ENCODE measurements at regions of chr19 and their contacts with region 1.

Region 1: DNA sequence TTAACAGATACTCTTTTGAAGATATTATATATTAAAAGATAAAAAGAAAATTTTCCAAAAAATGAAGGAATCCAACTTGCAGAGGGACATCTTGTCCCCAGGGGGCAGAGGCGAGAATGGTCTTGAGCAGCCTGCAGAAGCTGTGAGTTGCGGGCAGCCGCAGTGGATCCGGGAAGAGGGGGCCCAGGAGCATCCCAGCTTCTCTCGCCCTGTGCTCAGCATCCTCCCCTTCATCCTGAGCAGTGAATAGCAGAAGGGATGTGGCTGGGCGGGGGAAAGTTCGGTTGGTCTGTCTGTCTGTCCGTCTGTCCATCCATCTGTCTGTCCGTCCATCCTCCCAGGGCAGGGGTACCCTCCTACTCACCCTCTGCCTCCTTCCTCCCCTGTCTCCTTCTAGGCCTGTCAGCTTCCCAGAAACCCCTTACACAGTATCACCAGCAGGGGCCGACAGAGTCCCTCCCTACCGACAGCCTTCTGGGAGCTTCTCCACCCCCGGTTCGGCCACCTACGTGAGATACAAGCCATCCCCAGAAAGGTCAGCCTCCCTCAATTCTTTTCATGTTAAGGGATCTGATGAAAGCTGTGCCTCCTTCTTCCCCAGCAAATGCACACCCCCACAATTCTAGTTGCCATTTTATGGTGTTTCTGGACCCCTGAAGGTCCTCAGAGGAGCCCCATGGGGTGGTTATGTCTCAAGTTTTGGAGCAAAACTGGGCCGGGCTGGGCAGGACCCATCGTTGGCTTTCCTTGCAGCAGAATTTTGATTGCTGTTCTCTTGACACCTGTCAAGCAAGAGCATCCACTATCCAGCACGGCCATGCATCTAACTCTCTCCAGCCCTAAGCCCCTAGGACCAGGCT is 81.6 kb downstream of the DPF1 start:
- H3K4me3 ChIP-seq: no peak overlapping the region
- H3K27ac ChIP-seq: no peak overlapping the region
- H3K4me1 ChIP-seq: peaks cover 2% of the 10 kb centered on the region; the same call in 1 of the 2 replicates
- CTCF ChIP-seq: peak; percentile 90

Region 2: GRCh38 chr19:38122402-38123093 is 19.9 kb before region 1 on chr19:
- CTCF ChIA-PET with region 1: interaction called, 13 read pairs
- POLR2A ChIA-PET with region 1: no interaction called
- H3K4me3 ChIP-seq: no peak overlapping the region
- H3K27ac ChIP-seq: no peak overlapping the region
- H3K4me1 ChIP-seq: no peaks in the 10 kb centered on the region
- CTCF ChIP-seq: no peak

Region 3: DNA sequence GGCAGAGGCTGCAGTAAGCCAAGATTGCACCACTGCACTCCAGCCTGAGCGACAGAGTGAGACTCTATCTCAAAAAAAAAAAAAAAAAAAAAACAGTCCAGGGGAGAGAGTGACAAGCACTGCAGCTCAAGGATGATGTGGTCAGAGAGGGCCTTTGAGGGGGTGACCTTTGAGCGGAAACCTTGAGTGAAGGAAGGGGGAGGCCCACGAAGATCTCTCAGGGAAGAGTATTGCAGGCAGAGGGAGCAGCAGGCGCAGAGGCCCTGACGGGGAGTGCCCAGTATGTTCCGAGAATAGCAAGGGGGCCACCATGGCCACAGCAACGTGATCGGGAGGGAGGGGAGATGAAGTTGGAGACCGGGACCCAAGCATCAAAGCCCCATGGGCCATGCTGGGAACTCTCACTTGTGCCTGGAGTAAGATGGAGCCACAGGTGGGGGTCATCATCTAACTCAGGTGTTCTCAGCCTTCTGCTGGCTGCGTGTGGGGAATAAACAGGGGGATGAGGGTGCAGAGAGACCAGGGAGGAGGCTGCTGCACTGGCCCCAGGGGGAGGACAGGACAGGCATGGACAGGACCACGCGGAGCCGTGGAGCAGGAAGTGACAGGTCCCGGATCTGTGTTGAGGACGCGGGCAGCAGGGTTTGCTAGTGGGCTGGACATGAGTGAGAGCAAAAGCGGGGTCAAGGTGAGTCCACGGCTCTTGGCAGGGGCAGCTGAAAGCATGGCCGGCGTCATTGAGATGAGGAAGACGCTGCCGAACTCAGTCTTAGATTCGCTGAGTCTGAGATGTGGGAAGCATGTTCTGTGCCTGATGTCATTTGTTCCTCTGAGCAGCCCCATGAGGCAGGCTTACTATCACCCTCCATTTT is 21.2 kb after region 1 on chr19:
- CTCF ChIA-PET with region 1: interaction called, 15 read pairs
- POLR2A ChIA-PET with region 1: no interaction called
- H3K4me3 ChIP-seq: no peak overlapping the region
- H3K27ac ChIP-seq: no peak overlapping the region
- H3K4me1 ChIP-seq: no peaks in the 10 kb centered on the region
- CTCF ChIP-seq: no peak

Region 4: GRCh38 chr19:38209671-38210457 is 67.5 kb after region 1 on chr19:
- CTCF ChIA-PET with region 1: no interaction called
- POLR2A ChIA-PET with region 1: no interaction called
- H3K4me3 ChIP-seq: no peak overlapping the region
- H3K27ac ChIP-seq: 0 out of 2 replicates have a peak overlapping the region, but pooled peaks have one; percentile 31
- H3K4me1 ChIP-seq: peaks cover 25% of the 10 kb centered on the region
- CTCF ChIP-seq: 0 out of 2 replicates have a peak, but pooled peaks have one; percentile 39

Region 5: DNA sequence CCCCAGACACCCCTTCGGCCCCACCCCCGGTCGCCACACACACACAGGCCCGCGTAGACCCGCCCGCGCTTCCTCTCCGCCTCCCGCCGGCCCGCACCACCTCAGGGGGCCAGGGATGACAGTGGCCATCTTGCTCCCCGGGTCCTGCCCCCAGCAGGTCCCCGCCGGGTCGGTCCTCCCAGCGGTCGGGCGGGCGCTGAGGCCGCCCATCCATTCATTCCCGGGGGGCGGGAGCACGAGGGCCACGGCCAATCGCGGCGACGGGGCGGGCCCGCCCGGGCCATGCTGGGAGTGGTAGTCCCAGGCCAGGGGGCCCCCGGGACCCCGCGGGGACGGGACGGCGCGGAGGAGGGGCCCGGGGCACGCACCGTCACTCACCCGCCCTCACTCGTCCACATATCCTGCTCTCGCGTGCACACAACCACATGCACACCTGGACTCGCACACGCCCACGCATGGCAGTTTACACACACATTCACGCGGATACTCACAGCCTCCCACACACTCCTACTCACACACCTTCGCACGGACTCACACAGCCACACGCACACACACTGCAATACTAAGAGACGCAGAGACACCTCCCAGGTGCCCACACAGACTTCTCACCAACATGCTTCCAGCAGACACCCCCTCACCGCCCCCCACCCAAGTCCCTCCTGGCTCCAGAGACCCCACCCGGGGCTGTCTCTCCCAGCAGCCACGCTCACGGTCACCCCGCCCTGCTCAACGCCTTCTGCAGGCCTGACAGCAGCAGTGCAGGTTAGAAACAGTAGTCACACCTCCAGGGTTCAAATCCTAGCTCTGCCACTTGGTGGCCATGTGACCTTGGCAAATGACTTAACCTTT is 81.8 kb after region 1 on chr19 and contains the start of gene DPF1:
- CTCF ChIA-PET with region 1: interaction called, 31 read pairs
- POLR2A ChIA-PET with region 1: interaction called, 5 read pairs
- H3K4me3 ChIP-seq: peak within 1 kb of the TSS; percentile 62
- H3K27ac ChIP-seq: peak within 1 kb of the TSS; percentile 50; the same call in 1 of the 2 replicates
- H3K4me1 ChIP-seq: peaks cover 16% of the 10 kb centered on the region
- CTCF ChIP-seq: peak; percentile 90

Measured in HEK293 (cell line).